ENCODE measurements at regions of chr1 and their contacts with region 1.

Region 1: DNA sequence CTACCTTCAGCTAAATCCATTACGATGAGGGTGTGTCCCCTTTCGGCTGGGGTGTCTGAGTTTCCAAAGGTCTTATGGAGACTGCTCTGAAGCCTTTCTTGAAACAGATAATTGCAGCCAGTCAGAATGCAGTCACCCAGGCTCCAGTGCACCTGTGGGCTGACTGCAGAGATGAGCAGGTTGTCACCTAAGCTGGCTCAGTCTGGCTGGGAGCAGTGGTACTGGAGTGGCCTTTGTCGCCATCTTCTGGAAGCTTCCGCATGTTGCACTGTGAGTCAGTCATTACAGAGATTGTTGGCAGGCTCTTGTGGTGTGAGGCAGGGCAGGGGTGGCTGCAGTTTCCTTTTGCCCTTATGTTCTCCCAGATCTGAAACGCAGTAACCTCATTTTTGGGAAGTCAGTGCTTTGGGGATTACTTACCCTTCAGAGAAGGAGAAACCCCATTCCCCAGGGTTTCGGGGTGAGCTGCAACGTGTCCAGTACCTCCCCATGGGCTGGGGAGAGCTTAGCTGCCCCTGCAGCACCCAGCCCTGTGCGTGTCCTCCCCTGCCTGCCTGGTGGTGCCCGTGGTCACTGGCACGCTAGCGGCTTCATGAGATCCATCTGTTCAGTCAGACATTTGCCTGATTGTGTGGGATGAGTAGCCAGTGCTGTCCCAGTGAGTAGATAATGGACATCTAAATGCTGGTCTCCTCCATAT is 48.0 kb downstream of the SMYD2 start:
- DNase-seq: peak; percentile 77 to 83 (median 82)
- ATAC-seq: peak; percentile 74 to 89 (median 86)
- H3K4me3 ChIP-seq: no peak overlapping the region
- H3K27ac ChIP-seq: peak overlapping the region in 8 of 12 donors; percentile 36 to 78 (median 65)
- H3K4me1 ChIP-seq: peaks cover 0 to 50% (median 15%) of the 10 kb centered on the region in 12 donors
- H3K27me3 ChIP-seq: no peaks in the 10 kb centered on the region
- CTCF ChIP-seq: peak; percentile 86 to 94 (median 90)
- POLR2A ChIP-seq: no peak

Region 2: DNA sequence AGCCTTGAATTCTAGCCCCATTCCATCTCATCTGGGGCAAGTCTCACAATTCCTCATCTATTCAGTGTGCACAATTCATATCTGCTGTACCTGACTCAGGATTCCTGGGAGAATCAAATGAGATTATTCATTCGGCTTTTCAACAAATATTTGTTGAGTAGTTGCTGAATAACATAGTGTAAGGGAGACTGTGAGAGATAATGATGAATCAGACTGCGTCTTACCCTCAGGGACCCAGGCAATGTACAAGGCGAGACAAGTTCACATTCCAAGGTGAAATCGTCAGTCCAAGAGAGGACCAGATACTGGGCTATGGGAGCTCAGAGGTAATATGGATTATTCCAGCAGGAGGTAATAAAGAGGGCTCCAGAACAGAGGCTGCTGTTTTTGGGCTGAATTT is 115.8 kb before region 1 on chr1:
- intact Hi-C with region 1: loop called (anchors 1 to 5 kb)
- DNase-seq: no peak
- ATAC-seq: no peak
- H3K4me3 ChIP-seq: no peak overlapping the region
- H3K27ac ChIP-seq: no peak overlapping the region
- H3K4me1 ChIP-seq: peaks cover 0 to 12% (median 6%) of the 10 kb centered on the region in 12 donors
- H3K27me3 ChIP-seq: no peaks in the 10 kb centered on the region
- CTCF ChIP-seq: no peak
- POLR2A ChIP-seq: no peak

Region 3: GRCh38 chr1:214281021-214281719 is 47.8 kb before region 1 on chr1 and contains the start of gene SMYD2:
- intact Hi-C with region 1: loop called in 3 of 10 experiments (anchors 2 to 5 kb)
- DNase-seq: peak; percentile 80 to 90 (median 87)
- ATAC-seq: peak; percentile 16 to 84 (median 59)
- H3K4me3 ChIP-seq: peak within 1 kb of the TSS; percentile 58 to 98 (median 92)
- H3K27ac ChIP-seq: peak within 1 kb of the TSS; percentile 94 to 100 (median 98)
- H3K4me1 ChIP-seq: peaks cover 0 to 63% (median 34%) of the 10 kb centered on the region in 12 donors
- H3K27me3 ChIP-seq: no peaks in the 10 kb centered on the region
- CTCF ChIP-seq: no peak
- POLR2A ChIP-seq: peak; percentile 69 to 93
- total RNA-seq, gene SMYD2: 204 to 406 (median 342) TPM

Region 4: DNA sequence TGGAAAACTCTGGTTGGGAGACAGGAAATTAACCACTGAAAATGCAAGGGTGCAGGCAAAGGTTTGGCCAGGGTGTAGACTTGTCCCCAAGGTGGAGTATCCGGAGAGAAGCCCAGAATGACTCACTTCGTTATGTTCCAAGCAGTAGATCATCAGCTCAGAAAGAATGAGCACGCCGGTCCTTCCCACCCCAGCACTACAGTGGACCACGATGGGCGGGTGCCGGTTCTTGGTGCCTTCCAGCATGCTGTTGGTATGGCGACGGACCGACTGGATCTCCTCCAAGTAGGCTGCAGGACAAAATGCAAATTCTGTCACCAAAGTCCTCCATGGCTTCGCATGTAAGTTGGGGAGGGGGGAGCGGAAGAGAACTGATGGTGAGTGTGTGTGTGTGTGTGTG is 35.5 kb after region 1 on chr1:
- intact Hi-C with region 1: no loop called
- DNase-seq: peak in 4 of 5 donors; percentile 31 to 67 (median 54)
- ATAC-seq: peak in 3 of 4 donors; percentile 46 to 71 (median 49)
- H3K4me3 ChIP-seq: no peak overlapping the region
- H3K27ac ChIP-seq: peak overlapping the region in 4 of 12 donors; percentile 19 to 85 (median 54)
- H3K4me1 ChIP-seq: peaks cover 0 to 54% (median 33%) of the 10 kb centered on the region in 12 donors
- H3K27me3 ChIP-seq: no peaks in the 10 kb centered on the region
- CTCF ChIP-seq: no peak
- POLR2A ChIP-seq: no peak

Region 5: DNA sequence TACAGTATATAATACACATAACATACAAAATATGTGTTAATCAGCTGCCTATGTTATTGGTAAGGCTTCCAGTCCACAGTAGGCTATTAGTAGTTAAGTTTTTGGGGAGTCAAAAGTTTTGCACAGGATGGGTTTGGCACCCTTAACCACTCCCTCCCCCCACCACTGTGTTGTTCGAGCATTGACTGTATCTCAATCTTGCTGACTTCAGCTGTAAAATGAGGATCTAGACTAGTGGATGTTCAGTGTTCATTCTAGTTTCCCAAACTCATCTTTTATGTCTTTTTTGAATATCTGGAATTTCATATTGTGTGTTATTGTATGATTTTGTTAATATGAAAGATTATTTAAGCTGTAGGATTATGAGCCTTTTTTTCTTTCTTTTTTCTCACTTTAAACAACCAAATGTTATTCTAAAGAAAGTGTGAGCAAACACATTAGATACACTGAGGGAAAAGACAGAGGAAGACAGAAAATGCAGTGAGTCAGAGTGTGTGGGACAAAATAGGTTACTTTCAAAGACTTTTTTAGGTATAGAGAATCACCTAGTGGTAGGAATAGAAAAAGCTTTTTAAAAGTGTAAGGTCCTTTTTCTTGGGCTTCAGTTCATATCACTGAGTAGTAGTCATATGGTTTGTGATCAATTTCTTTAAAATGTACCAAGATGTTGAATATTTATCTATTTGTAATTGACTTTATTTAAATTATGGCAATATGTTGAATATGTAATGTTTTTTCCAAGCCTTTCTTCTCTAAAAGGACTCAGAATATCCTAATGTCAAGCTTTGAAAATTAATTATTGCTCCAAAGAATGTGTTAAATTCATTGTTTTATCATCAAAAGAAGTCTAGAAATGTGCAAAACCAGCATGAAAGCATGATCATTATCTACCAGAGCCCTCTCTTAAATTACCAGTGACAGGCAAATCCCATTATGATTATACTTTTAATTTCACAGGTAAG is 256.2 kb after region 1 on chr1:
- intact Hi-C with region 1: loop called (anchors 1 to 5 kb)
- DNase-seq: no peak
- ATAC-seq: peak; percentile 55 to 86 (median 78)
- H3K4me3 ChIP-seq: no peak overlapping the region
- H3K27ac ChIP-seq: no peak overlapping the region
- H3K4me1 ChIP-seq: peaks cover 0 to 4% (median 0%) of the 10 kb centered on the region in 12 donors
- H3K27me3 ChIP-seq: no peaks in the 10 kb centered on the region
- CTCF ChIP-seq: peak; percentile 51 to 84 (median 74)
- POLR2A ChIP-seq: no peak

Region 6: GRCh38 chr1:215526553-215527151 is 1197.7 kb after region 1 on chr1:
- intact Hi-C with region 1: loop called in 3 of 10 experiments (anchors 5 to 10 kb)
- DNase-seq: no peak
- ATAC-seq: no peak
- H3K4me3 ChIP-seq: no peak overlapping the region
- H3K27ac ChIP-seq: no peak overlapping the region
- H3K4me1 ChIP-seq: peaks cover 0 to 4% (median 0%) of the 10 kb centered on the region in 12 donors
- H3K27me3 ChIP-seq: peaks cover 0 to 3% (median 0%) of the 10 kb centered on the region in 9 donors
- CTCF ChIP-seq: peak; percentile 48 to 81 (median 74)
- POLR2A ChIP-seq: no peak

Measured in heart left ventricle (tissue), 16 donors.